Mammary epithelial cell (primary cell): ENCODE measurements at regions of chr17 and their contacts with region 1.

Region 1: DNA sequence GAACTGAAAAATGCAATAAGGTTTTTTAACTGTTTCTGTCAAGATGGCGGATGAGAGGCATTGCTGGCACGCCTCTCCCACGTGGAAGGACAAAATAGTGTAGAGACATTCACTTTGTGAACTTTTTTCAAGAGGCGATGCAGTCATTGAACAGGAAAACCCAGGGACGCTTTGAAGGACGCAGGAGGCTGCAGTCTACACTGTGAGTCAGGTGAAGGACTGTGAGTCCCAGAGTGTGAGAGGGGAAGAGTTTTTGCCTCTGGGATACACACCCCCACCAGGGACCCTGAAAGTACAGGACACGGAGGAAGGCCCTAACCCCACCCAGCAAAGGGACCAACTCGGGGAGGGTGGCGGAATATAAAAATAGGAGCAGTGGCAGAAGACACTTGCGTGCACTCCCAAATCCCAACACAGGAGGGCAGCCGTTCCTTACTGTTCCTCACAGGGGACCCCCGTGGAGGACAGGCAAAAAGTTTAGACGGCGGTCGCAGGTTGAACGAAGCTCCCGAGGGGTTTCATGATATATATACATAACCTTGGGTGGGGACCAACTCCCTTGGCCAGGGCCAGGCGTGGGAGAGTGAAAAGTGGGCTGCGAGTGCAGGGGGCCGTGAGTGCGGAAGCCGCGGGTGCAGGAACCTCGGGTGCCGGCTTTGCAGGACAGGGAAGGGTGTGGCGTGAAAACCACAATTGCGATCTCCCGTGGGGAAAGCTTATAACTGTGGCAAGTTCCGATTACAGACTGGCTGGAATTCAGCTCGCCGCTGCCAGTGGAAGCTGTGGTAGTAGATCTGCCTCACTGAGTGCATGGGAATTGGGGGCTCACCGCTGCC is 82.0 kb upstream of the ALOX12 start:
- DNase-seq: no peak
- H3K4me3 ChIP-seq: no peak overlapping the region
- H3K27ac ChIP-seq: no peak overlapping the region
- H3K4me1 ChIP-seq: no peaks in the 10 kb centered on the region
- H3K27me3 ChIP-seq: no peaks in the 10 kb centered on the region
- CTCF ChIP-seq: peak; percentile 43 to 70

Region 2: GRCh38 chr17:6995431-6996255 is 81.8 kb after region 1 on chr17 and contains the start of gene ALOX12:
- CTCF ChIA-PET with region 1: no interaction called
- dilution Hi-C with region 1: loop called (anchors 5 kb)
- in situ Hi-C with region 1: loop called in 1 of 2 experiments (anchors 10 kb)
- intact Hi-C with region 1: no loop called
- DNase-seq: no peak
- H3K4me3 ChIP-seq: peak within 1 kb of the TSS; percentile 41 to 79 (median 61)
- H3K27ac ChIP-seq: no peak within 1 kb of the TSS
- H3K4me1 ChIP-seq: peaks cover 8% of the 10 kb centered on the region
- H3K27me3 ChIP-seq: no peaks in the 10 kb centered on the region
- CTCF ChIP-seq: no peak
- total RNA-seq, gene ALOX12: not detected

Region 3: DNA sequence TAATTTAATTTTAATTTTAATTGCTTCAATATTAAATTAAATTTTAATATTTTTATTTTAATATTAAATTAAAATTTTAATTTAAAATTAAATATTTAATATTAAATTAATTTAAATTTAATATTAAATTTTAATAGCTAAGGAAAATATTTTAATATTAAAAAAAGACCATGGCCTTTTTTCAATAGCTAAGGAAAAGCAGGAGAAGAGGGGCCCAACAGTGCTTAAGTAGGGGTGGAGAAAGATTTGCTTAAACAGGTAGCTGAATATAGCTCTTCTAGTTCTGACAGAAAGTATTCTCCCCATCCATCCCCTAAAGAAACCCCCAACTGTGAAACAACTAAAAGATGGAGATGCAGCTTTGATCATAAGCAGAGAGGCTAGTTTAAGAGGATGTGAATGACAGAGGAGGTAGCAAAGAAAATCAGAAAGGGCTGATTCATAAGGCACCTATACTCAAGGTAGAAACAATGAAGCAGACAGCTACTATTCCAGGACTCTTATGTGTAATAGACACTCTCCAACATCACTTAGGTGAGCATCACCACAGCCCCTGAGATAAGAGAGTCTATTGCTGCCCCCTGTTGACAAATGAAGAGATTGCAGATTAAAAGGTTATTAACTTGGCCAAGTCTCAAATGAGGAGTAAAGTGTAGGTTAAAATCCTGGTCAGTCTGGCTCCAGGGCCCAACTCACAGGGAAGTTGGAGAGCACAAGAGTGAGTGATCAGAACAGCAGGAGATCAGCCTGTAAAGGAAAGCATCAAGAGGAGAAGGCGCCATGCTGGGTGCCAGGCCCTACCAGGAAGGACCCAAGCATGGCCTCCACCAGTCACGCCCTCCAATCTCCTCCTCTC is 90.8 kb after region 1 on chr17:
- CTCF ChIA-PET with region 1: interaction called, 6 read pairs
- dilution Hi-C with region 1: loop called (anchors 5 kb)
- in situ Hi-C with region 1: loop called in 1 of 2 experiments (anchors 10 kb)
- intact Hi-C with region 1: loop called (anchors 1 kb)
- DNase-seq: peak; percentile 69
- H3K4me3 ChIP-seq: no peak overlapping the region
- H3K27ac ChIP-seq: no peak overlapping the region
- H3K4me1 ChIP-seq: no peaks in the 10 kb centered on the region
- H3K27me3 ChIP-seq: no peaks in the 10 kb centered on the region
- CTCF ChIP-seq: peak; percentile 66 to 69

Region 4: GRCh38 chr17:7021993-7022778 is 108.4 kb after region 1 on chr17:
- CTCF ChIA-PET with region 1: no interaction called
- dilution Hi-C with region 1: no loop called
- in situ Hi-C with region 1: no loop called
- intact Hi-C with region 1: loop called (anchors 5 kb)
- DNase-seq: no peak
- H3K4me3 ChIP-seq: peak overlapping the region in 2 of 3 experiments; percentile 6 to 33
- H3K27ac ChIP-seq: no peak overlapping the region
- H3K4me1 ChIP-seq: peaks cover 7% of the 10 kb centered on the region
- H3K27me3 ChIP-seq: no peaks in the 10 kb centered on the region
- CTCF ChIP-seq: peak; percentile 70 to 94

Region 5: GRCh38 chr17:7064261-7064660 is 150.4 kb after region 1 on chr17:
- CTCF ChIA-PET with region 1: no interaction called
- dilution Hi-C with region 1: no loop called
- in situ Hi-C with region 1: no loop called
- intact Hi-C with region 1: no loop called
- DNase-seq: no peak
- H3K4me3 ChIP-seq: no peak overlapping the region
- H3K27ac ChIP-seq: no peak overlapping the region
- H3K4me1 ChIP-seq: peaks cover 21% of the 10 kb centered on the region
- H3K27me3 ChIP-seq: no peaks in the 10 kb centered on the region
- CTCF ChIP-seq: no peak